ENCODE measurements at regions of chr11 and their contacts with region 1.

Region 1: DNA sequence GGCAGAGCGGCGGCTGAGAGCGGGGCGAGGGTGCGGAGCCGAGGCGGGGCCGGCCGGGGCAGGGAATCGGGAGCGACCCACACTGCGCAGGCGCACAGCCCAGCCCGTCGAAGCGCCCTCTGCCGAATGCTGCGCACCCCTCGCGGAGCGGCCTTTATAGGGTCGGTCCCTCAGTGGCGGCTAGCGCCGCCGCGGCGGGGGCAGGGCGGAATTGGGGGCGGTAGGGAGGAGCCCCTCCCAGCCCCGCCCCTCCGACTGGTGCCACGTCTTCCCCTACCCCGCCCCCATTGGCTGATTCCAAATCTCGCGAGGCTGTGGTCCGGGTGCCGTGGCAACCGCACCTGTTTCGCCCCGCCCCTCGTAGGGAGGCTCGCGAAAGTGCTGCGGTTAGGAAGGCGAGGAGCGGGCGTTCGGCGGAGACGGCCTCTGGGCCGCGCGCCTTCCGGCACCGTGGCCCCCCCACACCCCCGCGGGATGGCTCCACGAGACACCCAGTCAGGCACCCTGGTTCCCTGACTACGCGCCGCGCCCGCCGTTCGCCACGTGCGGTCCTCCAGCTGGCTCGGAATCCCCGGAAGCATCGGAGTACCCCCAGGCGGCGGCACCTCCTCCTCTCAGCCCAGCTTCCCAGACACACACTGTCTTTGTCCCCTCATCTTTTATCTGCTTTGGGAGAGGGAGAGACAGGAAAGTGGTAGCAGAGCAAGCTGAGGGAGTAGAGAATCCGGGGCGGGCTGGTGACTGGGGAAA is at the start of gene EHD1:
- DNase-seq: peak; percentile 88
- ATAC-seq: peak; percentile 89
- H3K4me3 ChIP-seq: peak within 1 kb of the TSS; percentile 88 to 99
- H3K27ac ChIP-seq: peak within 1 kb of the TSS; percentile 97
- H3K4me1 ChIP-seq: peaks cover 33% of the 10 kb centered on the region
- H3K27me3 ChIP-seq: no peaks in the 10 kb centered on the region
- CTCF ChIP-seq: peak; percentile 94
- total RNA-seq, gene EHD1: 186 TPM

Region 2: DNA sequence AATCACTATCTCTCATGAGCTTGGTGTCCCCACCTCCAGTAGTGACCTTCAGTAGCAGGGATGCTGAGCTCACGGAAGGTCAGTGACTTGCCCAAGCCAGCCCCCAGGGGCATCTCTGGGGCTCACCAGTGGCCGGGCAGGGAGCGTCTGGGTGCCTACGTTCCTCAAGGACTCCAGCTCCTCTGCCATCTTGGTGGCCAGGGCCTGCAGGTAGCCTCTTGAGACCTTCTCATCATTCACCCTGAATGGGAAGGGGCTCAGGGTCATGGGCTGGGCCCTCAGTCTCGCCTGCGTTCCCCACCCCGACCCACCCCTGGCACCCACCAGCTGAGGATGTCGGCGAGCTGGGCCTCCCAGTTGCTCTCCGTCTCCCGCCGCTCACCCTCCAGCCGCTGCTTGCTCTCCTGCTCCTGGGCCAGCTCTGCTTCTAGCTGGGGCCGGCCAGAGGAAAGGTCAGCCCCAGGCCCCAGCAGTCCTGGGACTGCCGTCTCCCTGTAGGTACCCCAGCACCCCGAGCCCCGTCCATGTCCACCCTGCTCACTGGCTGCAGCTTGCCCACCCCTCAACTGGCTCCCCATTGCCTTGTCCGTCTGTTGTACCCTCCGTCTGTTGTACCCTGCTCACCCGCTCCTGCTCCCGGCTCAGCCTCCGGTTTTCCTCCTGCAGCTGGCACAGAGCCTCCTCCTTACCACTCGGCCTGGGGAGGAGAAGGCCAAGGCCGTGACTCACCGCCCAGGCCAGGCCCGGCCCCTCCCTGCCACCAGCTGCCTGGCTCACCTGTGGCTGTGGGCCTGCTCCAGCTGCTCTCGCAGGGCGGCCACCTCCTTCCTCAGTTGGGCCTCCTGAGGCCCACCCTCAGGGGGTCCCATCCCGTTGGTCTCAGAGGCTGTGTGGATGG is 43.7 kb before region 1 on chr11:
- CTCF ChIA-PET with region 1: no interaction called
- POLR2A ChIA-PET with region 1: no interaction called
- in situ Hi-C with region 1: no loop called
- intact Hi-C with region 1: no loop called
- DNase-seq: no peak
- ATAC-seq: peak; percentile 89
- H3K4me3 ChIP-seq: no peak overlapping the region
- H3K27ac ChIP-seq: peak overlapping the region; percentile 59; the same call in 1 of the 2 replicates
- H3K4me1 ChIP-seq: peaks cover 18% of the 10 kb centered on the region
- H3K27me3 ChIP-seq: no peaks in the 10 kb centered on the region
- CTCF ChIP-seq: no peak

Region 3: GRCh38 chr11:64861227-64861975 is 17.3 kb before region 1 on chr11:
- CTCF ChIA-PET with region 1: interaction called, 8 read pairs
- POLR2A ChIA-PET with region 1: interaction called, 11 read pairs
- in situ Hi-C with region 1: no loop called
- intact Hi-C with region 1: no loop called
- DNase-seq: no peak
- ATAC-seq: no peak
- H3K4me3 ChIP-seq: no peak overlapping the region
- H3K27ac ChIP-seq: 0 out of 2 replicates have a peak overlapping the region, but pooled peaks have one; percentile 0
- H3K4me1 ChIP-seq: peaks cover 63% of the 10 kb centered on the region
- H3K27me3 ChIP-seq: no peaks in the 10 kb centered on the region
- CTCF ChIP-seq: no peak

Region 4: GRCh38 chr11:64894070-64894796 is 15.6 kb after region 1 on chr11:
- CTCF ChIA-PET with region 1: interaction called, 13 read pairs
- POLR2A ChIA-PET with region 1: interaction called, 7 read pairs
- in situ Hi-C with region 1: no loop called
- intact Hi-C with region 1: no loop called
- DNase-seq: no peak
- ATAC-seq: peak; percentile 88
- H3K4me3 ChIP-seq: no peak overlapping the region
- H3K27ac ChIP-seq: no peak overlapping the region
- H3K4me1 ChIP-seq: peaks cover 12% of the 10 kb centered on the region
- H3K27me3 ChIP-seq: no peaks in the 10 kb centered on the region
- CTCF ChIP-seq: peak; percentile 99

Measured in Panc1 (cell line).